Common myeloid progenitor, CD34-positive (primary cell): ENCODE measurements at regions of chr6 and their contacts with region 1.

Region 1: GRCh38 chr6:35452186-35453090 is at the start of gene FANCE:
- DNase-seq: peak; percentile 86 to 90 (median 89)
- H3K4me3 ChIP-seq: peak within 1 kb of the TSS; percentile 52 to 85 (median 70)
- H3K27ac ChIP-seq: peak within 1 kb of the TSS in 1 of 2 experiments; percentile 7
- H3K4me1 ChIP-seq: peaks cover 18 to 35% (median 21%) of the 10 kb centered on the region in 4 experiments
- H3K27me3 ChIP-seq: no peaks in the 10 kb centered on the region

Region 2: GRCh38 chr6:35342258-35343091 is 110.0 kb before region 1 on chr6 and contains the start of gene PPARD:
- CTCF ChIA-PET with region 1: interaction called, 26 read pairs
- POLR2A ChIA-PET with region 1: interaction called, 3 read pairs
- DNase-seq: peak; percentile 87 to 91 (median 88)
- H3K4me3 ChIP-seq: peak within 1 kb of the TSS; percentile 62 to 86 (median 74)
- H3K27ac ChIP-seq: peak within 1 kb of the TSS in 1 of 2 experiments; percentile 55
- H3K4me1 ChIP-seq: peaks cover 3 to 26% (median 13%) of the 10 kb centered on the region in 4 experiments
- H3K27me3 ChIP-seq: peaks cover 0 to 44% (median 31%) of the 10 kb centered on the region in 5 experiments

Region 3: GRCh38 chr6:35370124-35370741 is 82.2 kb before region 1 on chr6:
- CTCF ChIA-PET with region 1: interaction called, 10 read pairs
- POLR2A ChIA-PET with region 1: no interaction called
- DNase-seq: peak; percentile 36 to 84 (median 77)
- H3K4me3 ChIP-seq: no peak overlapping the region
- H3K27ac ChIP-seq: no peak overlapping the region
- H3K4me1 ChIP-seq: peaks cover 4 to 26% (median 18%) of the 10 kb centered on the region in 4 experiments
- H3K27me3 ChIP-seq: peaks cover 0 to 78% (median 55%) of the 10 kb centered on the region in 5 experiments

Region 4: GRCh38 chr6:35419417-35419816 is 33.0 kb before region 1 on chr6:
- CTCF ChIA-PET with region 1: interaction called, 35 read pairs
- POLR2A ChIA-PET with region 1: no interaction called
- DNase-seq: peak; percentile 24 to 55 (median 52)
- H3K4me3 ChIP-seq: no peak overlapping the region
- H3K27ac ChIP-seq: no peak overlapping the region
- H3K4me1 ChIP-seq: peaks cover 5 to 28% (median 26%) of the 10 kb centered on the region in 4 experiments
- H3K27me3 ChIP-seq: no peaks in the 10 kb centered on the region

Region 5: DNA sequence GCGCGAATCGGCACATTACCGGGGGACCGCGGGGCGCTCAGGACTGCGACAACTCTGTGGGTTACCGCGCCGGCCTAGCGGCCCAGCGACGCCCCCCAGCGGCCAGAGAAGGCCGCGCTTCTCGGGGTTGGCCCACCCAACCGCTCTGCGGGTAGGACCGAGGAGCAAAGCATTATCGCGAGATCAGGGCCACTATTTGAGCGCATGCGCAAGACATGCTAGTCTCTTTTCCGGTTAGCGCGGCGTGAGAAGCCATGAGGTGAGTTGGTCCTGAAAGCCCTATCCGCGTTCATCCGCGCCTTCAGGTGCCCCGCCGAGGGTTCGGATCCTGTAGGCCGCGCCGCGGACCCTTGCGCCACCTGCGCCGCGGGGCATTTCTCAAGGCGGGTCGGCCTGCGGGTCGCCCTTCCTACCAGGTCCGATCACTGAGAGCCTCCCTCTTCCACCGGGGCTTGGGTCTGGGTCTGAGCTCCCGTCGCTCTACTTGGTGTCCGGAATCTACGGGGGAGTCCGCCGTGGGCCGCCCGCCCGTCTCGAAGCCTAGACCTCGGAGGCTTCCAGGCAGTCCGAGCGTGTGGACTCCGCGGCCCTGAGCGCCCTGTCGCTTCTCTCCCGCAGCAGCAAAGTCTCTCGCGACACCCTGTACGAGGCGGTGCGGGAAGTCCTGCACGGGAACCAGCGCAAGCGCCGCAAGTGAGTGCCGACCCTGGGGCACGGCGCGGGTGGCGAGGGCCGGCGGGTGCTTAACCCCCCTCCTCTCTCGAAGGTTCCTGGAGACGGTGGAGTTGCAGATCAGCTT is 15.9 kb after region 1 on chr6 and contains the start of gene RPL10A:
- CTCF ChIA-PET with region 1: interaction called, 16 read pairs
- POLR2A ChIA-PET with region 1: interaction called, 5 read pairs
- DNase-seq: peak; percentile 97 to 99 (median 97)
- H3K4me3 ChIP-seq: peak within 1 kb of the TSS; percentile 73 to 97 (median 90)
- H3K27ac ChIP-seq: peak within 1 kb of the TSS; percentile 88 to 94
- H3K4me1 ChIP-seq: peaks cover 2 to 39% (median 30%) of the 10 kb centered on the region in 4 experiments
- H3K27me3 ChIP-seq: no peaks in the 10 kb centered on the region